Calu3 (cell line): ENCODE measurements at regions of chr19 and their contacts with region 1.

Region 1: GRCh38 chr19:58305065-58305931 is at the start of gene ERVK3-1:
- DNase-seq: peak; percentile 96
- H3K4me3 Mint-ChIP-seq: peak within 1 kb of the TSS; percentile 99
- H3K27ac Mint-ChIP-seq: peak within 1 kb of the TSS; percentile 96
- H3K4me1 Mint-ChIP-seq: peaks cover 21% of the 10 kb centered on the region
- H3K27me3 Mint-ChIP-seq: no peaks in the 10 kb centered on the region
- CTCF ChIP-seq: no peak
- total RNA-seq, gene ERVK3-1: 68.4 and 70.8 TPM in 2 replicates

Region 2: GRCh38 chr19:58278157-58279041 is 26.9 kb before region 1 on chr19 and contains the start of gene ZNF8:
- CTCF ChIA-PET with region 1: no interaction called
- intact Hi-C with region 1: loop called (anchors 1 kb)
- DNase-seq: peak; percentile 99
- H3K4me3 Mint-ChIP-seq: peak within 1 kb of the TSS; percentile 96
- H3K27ac Mint-ChIP-seq: peak within 1 kb of the TSS; percentile 96
- H3K4me1 Mint-ChIP-seq: peaks cover 10% of the 10 kb centered on the region
- H3K27me3 Mint-ChIP-seq: no peaks in the 10 kb centered on the region
- CTCF ChIP-seq: no peak
- total RNA-seq, gene ZNF8: 12.1 and 12.8 TPM in 2 replicates